Sigmoid colon (tissue), 7 donors: ENCODE measurements at regions of chr11 and their contacts with region 1.

Region 1: DNA sequence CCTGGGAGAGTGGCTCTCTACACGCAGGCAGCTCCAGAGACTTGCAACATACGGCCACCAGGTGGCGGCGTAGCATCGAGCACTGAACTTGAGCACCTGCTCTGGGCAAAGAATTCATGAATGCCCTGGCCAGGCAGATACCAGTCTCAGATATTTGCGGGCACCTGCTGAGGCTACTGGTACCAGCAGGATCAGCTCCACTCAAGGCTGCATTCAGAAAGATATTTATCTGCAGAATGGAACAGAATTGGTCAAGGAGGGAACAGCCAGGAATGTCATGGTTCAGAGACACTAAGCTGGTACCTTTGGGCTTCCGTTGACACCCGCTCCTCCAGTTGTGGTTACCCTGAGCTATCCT is 10.8 kb upstream of the CCDC86 start:
- DNase-seq: peak; percentile 87
- H3K4me3 ChIP-seq: no peak overlapping the region
- H3K27ac ChIP-seq: no peak overlapping the region
- H3K4me1 ChIP-seq: no peaks in the 10 kb centered on the region
- H3K27me3 ChIP-seq: no peaks in the 10 kb centered on the region
- CTCF ChIP-seq: peak; percentile 73 to 89 (median 88)
- EP300 ChIP-seq: no peak
- POLR2A ChIP-seq: no peak

Region 2: GRCh38 chr11:60786811-60787567 is 44.1 kb before region 1 on chr11:
- intact Hi-C with region 1: no loop called
- DNase-seq: peak; percentile 91
- H3K4me3 ChIP-seq: no peak overlapping the region
- H3K27ac ChIP-seq: peak overlapping the region in 3 of 4 donors; percentile 14 to 47 (median 40)
- H3K4me1 ChIP-seq: peaks cover 0 to 15% (median 13%) of the 10 kb centered on the region in 4 donors
- H3K27me3 ChIP-seq: no peaks in the 10 kb centered on the region
- CTCF ChIP-seq: no peak
- EP300 ChIP-seq: no peak
- POLR2A ChIP-seq: no peak

Region 3: GRCh38 chr11:60899046-60899936 is 68.2 kb after region 1 on chr11:
- intact Hi-C with region 1: loop called (anchors 1 kb)
- DNase-seq: peak; percentile 64
- H3K4me3 ChIP-seq: no peak overlapping the region
- H3K27ac ChIP-seq: peak overlapping the region in 1 of 4 donors; percentile 26
- H3K4me1 ChIP-seq: peaks cover 0 to 11% (median 5%) of the 10 kb centered on the region in 4 donors
- H3K27me3 ChIP-seq: no peaks in the 10 kb centered on the region
- CTCF ChIP-seq: peak; percentile 42 to 96 (median 92)
- EP300 ChIP-seq: no peak
- POLR2A ChIP-seq: no peak

Region 4: DNA sequence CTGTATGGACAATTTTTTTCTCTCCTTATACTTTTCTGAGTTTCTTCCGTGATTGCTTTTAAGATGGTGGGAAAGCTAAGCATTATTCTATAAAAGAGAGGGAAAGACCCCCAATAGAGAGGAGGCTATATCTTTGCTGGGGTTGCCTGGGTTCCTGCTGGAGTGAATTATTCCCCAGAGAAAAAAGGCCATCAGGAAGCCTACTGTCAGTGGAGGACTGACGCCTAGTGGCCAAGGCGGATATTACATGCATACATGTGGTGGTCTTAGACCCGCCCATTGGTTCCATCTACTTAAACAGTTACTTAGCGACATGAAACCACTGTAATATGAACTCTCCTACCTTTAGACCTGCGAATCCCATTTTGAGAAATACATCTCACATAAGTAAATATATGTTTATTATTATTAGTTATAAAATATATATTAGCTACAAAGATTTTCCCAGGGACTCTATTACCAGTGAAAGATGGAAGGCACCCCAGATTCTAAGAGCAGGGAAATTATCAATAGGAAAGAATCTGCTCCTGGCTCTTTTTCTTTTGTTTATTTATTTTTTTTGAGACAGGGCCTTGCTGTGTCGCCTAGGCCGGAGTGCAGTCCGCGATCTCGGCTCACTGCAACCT is 356.5 kb after region 1 on chr11:
- intact Hi-C with region 1: loop called (anchors 2 kb)
- DNase-seq: peak; percentile 85
- H3K4me3 ChIP-seq: no peak overlapping the region
- H3K27ac ChIP-seq: no peak overlapping the region
- H3K4me1 ChIP-seq: no peaks in the 10 kb centered on the region
- H3K27me3 ChIP-seq: no peaks in the 10 kb centered on the region
- CTCF ChIP-seq: peak; percentile 70 to 95 (median 88)
- EP300 ChIP-seq: no peak
- POLR2A ChIP-seq: no peak